Right ventricle myocardium inferior (tissue), 1 donor: ENCODE measurements at regions of chr16 and their contacts with region 1.

Region 1: GRCh38 chr16:21277927-21278706 is at the start of gene CRYM:
- DNase-seq: peak; percentile 86
- ATAC-seq: peak; percentile 95
- total RNA-seq, gene CRYM: 63.3 TPM

Region 2: GRCh38 chr16:20844588-20844987 is 433.5 kb before region 1 on chr16:
- intact Hi-C with region 1: no loop called
- DNase-seq: no peak
- ATAC-seq: no peak

Region 3: GRCh38 chr16:21184834-21185233 is 93.3 kb before region 1 on chr16:
- intact Hi-C with region 1: loop called (anchors 5 kb)
- DNase-seq: no peak
- ATAC-seq: no peak

Region 4: DNA sequence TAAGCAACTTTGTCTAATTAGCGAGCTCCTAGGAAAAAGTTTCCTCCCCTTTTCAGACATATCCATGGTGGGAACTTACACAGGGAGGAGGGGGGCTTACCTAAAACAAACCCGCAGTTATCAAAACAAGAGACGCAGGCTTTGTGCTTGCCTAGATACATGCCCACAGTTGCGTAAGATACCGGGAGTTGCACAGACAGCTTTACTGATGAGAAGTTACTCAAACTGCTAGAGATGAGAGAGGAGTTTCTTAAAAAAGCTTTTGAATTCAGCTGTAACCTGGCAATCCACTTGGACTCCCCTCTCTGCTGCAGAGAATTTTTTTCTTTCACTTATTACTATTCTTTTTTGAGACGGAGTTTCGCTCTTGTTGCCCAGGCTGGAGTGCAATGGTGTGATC is 60.0 kb before region 1 on chr16:
- intact Hi-C with region 1: no loop called
- DNase-seq: no peak
- ATAC-seq: no peak

Region 5: GRCh38 chr16:21599233-21600030 is 321.3 kb after region 1 on chr16 and contains the start of gene METTL9:
- intact Hi-C with region 1: no loop called
- DNase-seq: peak; percentile 97
- ATAC-seq: peak; percentile 99
- total RNA-seq, gene METTL9: 43.7 TPM